Cardiac septum (tissue), 1 donor: ENCODE measurements at regions of chr13 and their contacts with region 1.

Region 1: DNA sequence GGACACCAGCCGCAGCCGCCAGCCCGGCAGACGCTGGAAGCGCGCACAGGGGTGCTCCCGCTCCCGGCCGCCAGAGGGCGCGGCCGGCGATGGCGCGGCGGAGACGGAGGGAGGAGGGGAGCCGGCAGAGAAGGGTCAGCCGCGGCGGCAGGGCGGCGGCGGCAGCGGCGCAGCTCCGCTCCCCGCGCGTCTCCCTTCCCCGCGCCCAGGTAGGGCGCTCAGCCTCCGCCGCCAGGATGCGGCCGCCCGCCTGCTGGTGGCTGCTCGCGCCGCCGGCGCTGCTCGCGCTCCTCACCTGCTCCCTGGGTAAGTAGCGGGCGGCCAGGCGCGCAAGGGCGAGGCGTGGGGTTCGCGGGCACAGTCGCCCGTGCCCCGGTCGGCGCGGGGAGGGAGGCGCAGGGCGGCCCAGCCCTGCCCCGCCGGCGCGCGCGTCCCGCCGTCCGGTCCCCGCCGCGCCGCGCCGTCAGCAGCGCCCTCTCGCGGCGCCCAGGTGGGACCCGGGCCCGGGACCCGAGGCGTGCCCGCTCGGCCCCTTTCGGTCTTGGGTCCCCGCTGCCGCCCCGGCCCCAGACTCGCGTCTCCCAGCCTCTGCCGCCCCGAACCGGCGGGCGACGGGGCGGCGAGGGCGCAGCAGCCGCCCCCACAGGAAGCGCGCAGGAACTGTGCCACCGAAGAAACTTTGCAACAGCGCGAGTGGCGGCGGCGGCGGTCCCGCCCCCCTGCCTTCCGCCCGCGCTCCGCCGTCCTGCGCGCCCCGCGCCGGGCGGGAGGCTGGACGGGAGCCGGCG is at the start of gene B3GLCT:
- DNase-seq: peak; percentile 93
- total RNA-seq, gene B3GLCT: 17.5 TPM

Region 2: GRCh38 chr13:31161828-31162590 is 38.0 kb before region 1 on chr13 and contains the start of gene HSPH1:
- intact Hi-C with region 1: loop called (anchors 2 kb)
- DNase-seq: peak; percentile 99
- total RNA-seq, gene HSPH1: 61.9 TPM

Region 3: GRCh38 chr13:31223640-31224039 is 23.6 kb after region 1 on chr13:
- intact Hi-C with region 1: loop called (anchors 2 kb)
- DNase-seq: no peak

Region 4: DNA sequence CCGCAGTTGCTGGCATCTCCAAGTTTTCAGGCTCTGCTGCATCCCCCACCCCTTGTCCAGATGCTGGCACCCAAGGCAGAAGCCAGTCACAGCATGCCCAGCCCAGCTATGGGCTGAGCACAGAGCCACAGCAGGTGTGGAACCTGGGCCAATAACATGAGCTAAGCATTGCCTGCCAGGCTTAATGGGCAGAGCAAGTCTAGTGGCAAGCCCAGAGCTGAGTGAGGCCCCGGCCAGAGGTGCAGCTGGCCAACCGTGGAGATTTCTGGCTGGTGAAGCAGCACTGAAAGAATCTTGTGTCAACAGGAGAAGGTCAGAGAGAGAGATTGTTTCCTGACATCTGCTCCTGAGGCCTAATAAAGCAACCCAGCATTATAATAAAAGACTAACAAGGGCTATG is 110.7 kb after region 1 on chr13:
- intact Hi-C with region 1: no loop called
- DNase-seq: peak; percentile 81